ENCODE measurements at regions of chr1 and their contacts with region 1.

Region 1: DNA sequence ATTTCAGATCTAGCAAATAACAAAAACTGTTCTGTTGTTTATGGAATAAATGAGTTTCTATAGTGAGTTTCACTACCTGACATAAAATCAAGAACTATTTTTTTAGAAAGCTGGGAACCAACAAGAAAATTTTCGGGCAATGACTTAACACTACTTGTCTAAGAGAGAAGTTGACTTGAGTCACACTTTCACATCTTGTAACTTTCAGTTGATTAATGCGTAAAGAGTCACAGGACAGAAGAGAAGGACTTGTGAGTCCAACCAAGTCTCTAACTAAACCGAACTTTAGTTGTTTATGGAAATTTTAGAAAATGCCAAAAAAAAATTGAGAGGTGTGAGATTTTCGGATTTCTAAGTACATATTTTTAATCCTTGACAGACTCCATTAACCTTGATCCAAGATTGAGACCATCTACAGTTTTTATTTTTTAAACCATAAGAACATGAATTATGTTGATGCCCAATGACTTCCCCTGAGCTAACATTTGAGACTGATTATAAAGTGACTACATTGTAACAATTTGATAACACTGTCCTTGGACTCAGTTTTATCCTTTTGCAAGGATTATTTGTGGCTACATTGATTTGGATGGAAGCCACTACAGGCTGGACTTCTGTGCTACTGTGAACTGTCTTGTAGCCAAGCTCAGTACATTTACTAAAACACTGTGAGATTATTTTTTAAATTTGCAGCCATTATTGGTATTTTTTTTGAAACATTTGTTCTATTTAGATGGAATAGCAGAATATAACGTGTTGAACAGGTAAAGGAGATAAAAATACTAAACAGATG is 284.0 kb downstream of the PTPRC start:
- DNase-seq: no peak
- H3K4me3 Mint-ChIP-seq: no peak overlapping the region
- H3K27ac Mint-ChIP-seq: peak overlapping the region; percentile 43
- H3K4me1 Mint-ChIP-seq: peaks cover 43% of the 10 kb centered on the region
- H3K27me3 Mint-ChIP-seq: no peaks in the 10 kb centered on the region
- CTCF ChIP-seq: no peak

Region 2: GRCh38 chr1:198588845-198589244 is 334.0 kb before region 1 on chr1:
- CTCF ChIA-PET with region 1: no interaction called
- POLR2A ChIA-PET with region 1: no interaction called
- intact Hi-C with region 1: no loop called
- DNase-seq: no peak
- H3K4me3 Mint-ChIP-seq: no peak overlapping the region
- H3K27ac Mint-ChIP-seq: no peak overlapping the region
- H3K4me1 Mint-ChIP-seq: no peaks in the 10 kb centered on the region
- H3K27me3 Mint-ChIP-seq: no peaks in the 10 kb centered on the region
- CTCF ChIP-seq: no peak

Region 3: DNA sequence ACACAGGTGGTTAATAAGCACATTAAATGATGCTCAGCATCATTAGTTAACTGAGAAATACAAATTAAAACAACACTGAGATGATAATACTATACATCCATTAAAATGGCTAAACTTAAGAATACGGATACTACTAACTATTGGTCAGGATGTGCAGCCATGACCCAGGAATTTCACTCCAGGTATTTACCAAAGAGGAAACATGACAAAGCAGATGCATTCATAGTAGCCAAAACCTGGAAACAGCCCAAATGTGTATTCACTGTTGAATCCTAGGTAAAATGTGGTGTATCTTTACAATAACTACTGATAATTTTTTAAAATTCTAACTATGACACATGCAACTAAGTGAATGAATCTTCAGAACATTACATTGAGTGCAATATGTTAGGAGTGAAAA is 211.0 kb before region 1 on chr1:
- CTCF ChIA-PET with region 1: no interaction called
- POLR2A ChIA-PET with region 1: no interaction called
- intact Hi-C with region 1: no loop called
- DNase-seq: peak; percentile 37
- H3K4me3 Mint-ChIP-seq: no peak overlapping the region
- H3K27ac Mint-ChIP-seq: no peak overlapping the region
- H3K4me1 Mint-ChIP-seq: peaks cover 5% of the 10 kb centered on the region
- H3K27me3 Mint-ChIP-seq: no peaks in the 10 kb centered on the region
- CTCF ChIP-seq: no peak

Region 4: DNA sequence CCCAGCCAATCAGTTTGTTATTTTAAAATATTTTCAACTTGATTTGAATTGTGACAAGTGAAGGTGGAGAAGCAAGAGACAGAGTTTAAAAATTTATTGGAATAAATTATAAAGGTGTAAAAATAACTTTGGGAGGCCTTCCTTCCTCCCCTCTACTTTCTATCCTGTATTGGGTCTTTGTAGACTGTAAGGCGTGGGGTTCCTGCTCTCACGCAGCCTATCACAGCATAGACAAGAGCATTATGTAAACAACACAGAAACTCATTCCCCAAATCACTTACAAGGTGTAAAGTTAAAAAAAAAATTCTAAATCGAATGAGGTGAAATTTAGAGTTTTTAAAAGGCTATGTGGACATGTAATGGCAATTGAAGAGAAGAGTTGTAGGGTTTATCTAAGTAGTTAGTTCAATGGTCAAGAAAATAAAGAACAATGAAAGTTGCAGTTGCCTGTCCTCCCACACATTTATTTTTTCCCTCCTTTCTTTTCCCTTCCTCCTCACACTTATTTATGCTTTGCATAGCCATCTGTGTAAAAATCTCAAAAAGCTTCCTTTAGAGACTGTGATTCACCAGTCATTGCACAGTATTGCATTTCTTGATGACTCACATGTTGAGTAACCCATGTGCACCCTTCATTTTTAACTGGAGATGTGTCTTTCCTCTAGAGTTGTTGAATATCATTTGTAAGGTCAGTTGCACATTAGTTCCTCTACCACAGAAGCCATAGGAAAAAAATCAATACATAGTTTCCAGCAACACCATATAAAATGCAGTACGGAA is 41.8 kb before region 1 on chr1:
- CTCF ChIA-PET with region 1: interaction called, 3 read pairs
- POLR2A ChIA-PET with region 1: interaction called, 7 read pairs
- intact Hi-C with region 1: loop called (anchors 5 kb)
- DNase-seq: peak; percentile 97
- H3K4me3 Mint-ChIP-seq: peak overlapping the region; percentile 53
- H3K27ac Mint-ChIP-seq: peak overlapping the region; percentile 94
- H3K4me1 Mint-ChIP-seq: peaks cover 47% of the 10 kb centered on the region
- H3K27me3 Mint-ChIP-seq: no peaks in the 10 kb centered on the region
- CTCF ChIP-seq: no peak

Region 5: DNA sequence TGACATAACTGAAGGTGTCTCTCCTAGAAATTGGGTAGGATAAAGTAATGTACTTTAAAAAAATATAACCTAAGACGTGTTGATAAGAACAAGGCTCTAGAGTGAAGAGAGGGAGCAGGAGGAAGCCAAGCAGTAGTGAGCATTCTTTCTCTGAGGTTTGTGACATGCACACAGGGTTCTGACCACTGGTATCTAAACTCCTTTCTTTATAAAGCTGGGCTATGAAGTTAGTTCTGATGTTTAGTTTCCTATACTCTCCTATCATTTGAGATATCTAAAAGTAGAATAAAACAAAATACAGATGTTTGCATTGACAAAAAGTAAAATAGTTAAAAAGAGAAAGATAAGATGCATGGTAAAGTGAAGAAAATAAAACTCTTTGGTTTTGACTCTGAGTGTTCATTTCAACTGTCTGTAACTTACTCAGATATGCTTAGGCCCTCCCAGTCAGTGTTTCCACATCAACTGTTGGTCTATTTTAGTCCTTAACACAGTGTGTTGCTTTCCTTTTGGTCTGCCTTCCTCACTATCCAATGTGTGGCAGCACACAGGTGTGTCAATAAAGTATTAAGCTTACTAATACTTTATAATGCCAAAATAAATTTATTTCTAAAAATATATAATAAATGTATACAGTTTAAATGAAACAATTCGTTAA is 259.5 kb after region 1 on chr1:
- CTCF ChIA-PET with region 1: no interaction called
- POLR2A ChIA-PET with region 1: no interaction called
- intact Hi-C with region 1: no loop called
- DNase-seq: no peak
- H3K4me3 Mint-ChIP-seq: no peak overlapping the region
- H3K27ac Mint-ChIP-seq: no peak overlapping the region
- H3K4me1 Mint-ChIP-seq: no peaks in the 10 kb centered on the region
- H3K27me3 Mint-ChIP-seq: no peaks in the 10 kb centered on the region
- CTCF ChIP-seq: no peak